ENCODE measurements at regions of chr4 and their contacts with region 1.

Region 1: GRCh38 chr4:112523764-112524505 is 8.0 kb upstream of the NEUROG2 start:
- DNase-seq: peak; percentile 87
- CTCF ChIP-seq: peak; percentile 84

Region 2: DNA sequence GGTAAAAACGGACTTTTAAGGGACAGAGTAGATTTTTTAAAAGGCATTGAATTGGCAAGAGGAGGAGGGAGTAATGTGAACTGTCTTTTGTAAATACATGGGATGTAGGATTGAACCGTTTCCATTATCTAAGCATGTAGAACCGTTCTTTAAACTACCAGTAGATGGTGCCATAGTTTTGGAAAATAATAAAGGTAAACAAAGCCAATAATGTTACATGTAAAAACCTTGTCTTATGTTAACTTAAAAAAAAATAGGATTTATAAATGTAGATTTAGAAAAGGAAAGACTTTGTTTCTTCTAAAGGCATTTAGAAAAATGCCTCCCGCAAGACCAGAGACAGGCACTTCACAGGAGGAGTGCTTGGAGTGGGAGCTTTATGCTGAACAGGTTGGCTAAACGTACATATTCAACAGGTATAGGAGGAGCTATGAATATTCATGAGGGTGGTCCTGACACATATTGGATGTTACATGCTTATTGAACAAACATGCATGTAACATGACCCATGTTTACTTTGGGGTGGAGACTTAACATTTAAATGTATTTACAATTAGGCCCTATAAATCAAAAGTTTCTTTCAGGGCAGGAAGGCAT is 424.1 kb before region 1 on chr4:
- CTCF ChIA-PET with region 1: interaction called, 63 read pairs
- POLR2A ChIA-PET with region 1: no interaction called
- DNase-seq: peak; percentile 51
- CTCF ChIP-seq: peak; percentile 64

Region 3: DNA sequence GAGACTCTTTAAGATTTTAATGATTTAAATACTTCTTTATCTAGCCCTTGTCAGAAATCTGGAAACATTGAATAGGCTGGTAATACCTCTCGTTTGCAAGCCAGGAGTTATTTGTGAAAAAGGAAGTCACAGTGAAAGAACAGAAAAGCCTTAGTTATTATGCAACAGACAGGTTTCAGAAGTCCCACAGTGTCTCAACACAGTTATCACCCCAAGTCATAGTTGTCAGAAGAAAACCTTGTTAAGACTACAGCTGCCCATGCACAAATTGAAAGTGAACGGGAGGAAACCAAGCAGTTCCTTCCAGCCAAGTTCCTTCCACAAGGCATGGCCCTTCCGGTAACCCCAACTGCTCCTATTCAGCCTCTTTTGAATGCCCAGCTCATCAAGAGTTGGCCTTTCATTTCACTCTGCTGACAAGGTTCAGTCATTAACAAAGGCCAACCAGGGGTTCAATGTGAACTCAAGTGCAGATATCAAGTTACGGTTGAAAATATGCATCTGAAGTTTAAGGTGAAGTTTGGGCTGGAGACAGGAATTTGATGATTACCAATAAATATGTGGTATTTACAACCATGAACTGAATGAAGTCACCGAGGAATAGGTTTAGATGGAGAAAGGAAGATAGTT is 211.2 kb before region 1 on chr4:
- CTCF ChIA-PET with region 1: interaction called, 17 read pairs
- POLR2A ChIA-PET with region 1: no interaction called
- DNase-seq: peak; percentile 74
- CTCF ChIP-seq: no peak

Region 4: GRCh38 chr4:112509243-112510141 is 14.4 kb before region 1 on chr4:
- CTCF ChIA-PET with region 1: interaction called, 74 read pairs
- POLR2A ChIA-PET with region 1: no interaction called
- DNase-seq: no peak
- CTCF ChIP-seq: no peak

Region 5: GRCh38 chr4:112604589-112604988 is 80.7 kb after region 1 on chr4:
- CTCF ChIA-PET with region 1: interaction called, 27 read pairs
- POLR2A ChIA-PET with region 1: no interaction called
- DNase-seq: peak; percentile 55
- CTCF ChIP-seq: peak; percentile 57